HepG2 (cell line): ENCODE measurements at regions of chr2 and their contacts with region 1.

Region 1: DNA sequence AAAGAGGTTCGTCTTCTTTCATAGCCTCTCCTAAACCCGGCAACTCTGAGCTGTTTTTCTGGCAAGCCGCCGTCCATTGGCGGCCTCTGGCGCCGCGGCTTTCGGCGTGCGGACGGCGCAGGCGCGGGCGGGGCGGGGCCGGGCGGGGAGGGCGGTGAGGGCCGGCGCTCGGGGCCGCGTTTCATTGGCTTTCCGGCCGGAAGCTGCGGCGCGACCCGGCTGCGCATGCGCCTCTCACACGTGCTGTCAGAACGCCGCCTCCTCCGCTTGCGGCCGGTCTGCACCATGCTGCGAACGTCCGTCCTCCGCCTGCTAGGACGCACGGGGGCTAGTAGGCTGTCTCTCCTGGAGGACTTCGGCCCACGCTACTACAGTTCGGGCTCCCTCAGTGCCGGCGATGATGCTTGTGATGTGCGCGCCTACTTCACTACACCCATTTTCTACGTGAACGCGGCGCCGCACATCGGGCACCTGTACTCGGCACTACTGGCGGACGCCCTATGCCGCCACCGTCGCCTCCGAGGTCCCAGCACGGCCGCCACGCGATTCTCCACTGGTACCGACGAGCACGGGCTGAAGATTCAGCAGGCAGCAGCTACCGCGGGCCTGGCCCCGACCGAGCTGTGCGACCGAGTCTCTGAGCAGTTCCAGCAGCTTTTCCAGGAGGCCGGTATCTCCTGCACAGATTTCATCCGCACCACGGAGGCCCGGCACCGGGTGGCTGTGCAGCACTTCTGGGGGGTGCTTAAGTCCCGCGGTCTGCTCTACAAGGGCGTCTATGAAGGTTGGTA is at the start of gene MARS2:
- DNase-seq: peak; percentile 88
- ATAC-seq: peak; percentile 88
- H3K4me3 ChIP-seq: peak within 1 kb of the TSS; percentile 60 to 86 (median 85)
- H3K27ac ChIP-seq: peak within 1 kb of the TSS; percentile 54
- H3K4me1 ChIP-seq: peaks cover 30% of the 10 kb centered on the region
- H3K27me3 ChIP-seq: no peaks in the 10 kb centered on the region; a peak in 1 of 5 replicates
- CTCF ChIP-seq: peak; percentile 42
- EP300 ChIP-seq: no peak; a peak in 1 of 4 replicates
- POLR2A ChIP-seq: peak; percentile 93 to 97
- RAD21 ChIP-seq: peak; percentile 17; the same call in 1 of the 2 replicates
- total RNA-seq, gene MARS2: 16.2 and 19.5 TPM in 2 replicates

Region 2: DNA sequence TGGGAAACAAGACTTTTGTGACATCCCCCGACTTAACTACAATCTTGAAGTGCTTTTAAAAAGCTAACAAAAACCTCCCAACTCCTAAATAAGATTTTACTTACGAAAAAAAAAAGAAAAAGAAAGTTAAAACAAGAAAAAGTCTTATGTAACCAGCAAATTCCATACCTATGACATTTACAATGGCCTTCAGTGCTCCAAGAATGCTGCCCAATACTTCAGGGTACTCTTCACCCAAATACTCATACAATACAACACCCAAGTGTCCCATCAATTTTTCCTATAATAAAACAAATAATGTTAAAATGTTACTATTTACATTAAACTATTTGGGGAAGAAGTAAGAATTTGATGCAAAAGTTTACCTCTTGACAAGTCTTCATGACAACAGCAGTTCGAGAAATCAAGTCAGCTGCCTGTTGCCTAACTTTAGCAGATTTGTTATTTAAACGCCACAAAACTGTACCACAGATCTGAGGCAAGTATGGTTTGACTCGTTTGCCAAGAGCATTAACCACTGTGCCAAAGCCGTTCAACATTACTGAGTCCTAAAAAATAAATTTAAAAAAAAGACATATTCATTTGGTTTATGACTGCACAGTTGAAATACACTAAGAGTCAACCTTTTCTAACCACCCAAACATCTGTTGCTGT is 305.3 kb before region 1 on chr2:
- CTCF ChIA-PET with region 1: no interaction called
- POLR2A ChIA-PET with region 1: no interaction called
- in situ Hi-C with region 1: no loop called
- intact Hi-C with region 1: loop called (anchors 10 kb)
- DNase-seq: no peak
- ATAC-seq: no peak
- H3K4me3 ChIP-seq: no peak overlapping the region
- H3K27ac ChIP-seq: no peak overlapping the region
- H3K4me1 ChIP-seq: no peaks in the 10 kb centered on the region
- H3K27me3 ChIP-seq: no peaks in the 10 kb centered on the region
- CTCF ChIP-seq: no peak
- EP300 ChIP-seq: no peak
- POLR2A ChIP-seq: no peak
- RAD21 ChIP-seq: no peak

Region 3: GRCh38 chr2:197615016-197615652 is 90.2 kb before region 1 on chr2:
- CTCF ChIA-PET with region 1: no interaction called
- POLR2A ChIA-PET with region 1: interaction called, 7 read pairs
- in situ Hi-C with region 1: no loop called
- intact Hi-C with region 1: loop called (anchors 2 kb)
- DNase-seq: peak; percentile 27
- ATAC-seq: peak; percentile 57
- H3K4me3 ChIP-seq: no peak overlapping the region
- H3K27ac ChIP-seq: no peak overlapping the region
- H3K4me1 ChIP-seq: peaks cover 34% of the 10 kb centered on the region
- H3K27me3 ChIP-seq: peaks cover 1 to 40% of the 10 kb centered on the region in 2 experiments; a peak in 4 of 5 replicates
- CTCF ChIP-seq: peak; percentile 75
- EP300 ChIP-seq: no peak
- POLR2A ChIP-seq: no peak
- RAD21 ChIP-seq: no peak

Region 4: GRCh38 chr2:197717858-197718257 is 12.5 kb after region 1 on chr2:
- CTCF ChIA-PET with region 1: no interaction called
- POLR2A ChIA-PET with region 1: no interaction called
- in situ Hi-C with region 1: no loop called
- intact Hi-C with region 1: no loop called
- DNase-seq: no peak
- ATAC-seq: no peak
- H3K4me3 ChIP-seq: no peak overlapping the region
- H3K27ac ChIP-seq: no peak overlapping the region
- H3K4me1 ChIP-seq: peaks cover 7% of the 10 kb centered on the region
- H3K27me3 ChIP-seq: no peaks in the 10 kb centered on the region
- CTCF ChIP-seq: no peak
- EP300 ChIP-seq: no peak
- POLR2A ChIP-seq: no peak
- RAD21 ChIP-seq: no peak